ENCODE measurements at regions of chr6 and their contacts with region 1.

Region 1: GRCh38 chr6:97110626-97111025 is 172.4 kb downstream of the MMS22L start:
- DNase-seq: no peak
- H3K4me3 ChIP-seq: no peak overlapping the region
- H3K27ac ChIP-seq: no peak overlapping the region
- H3K4me1 ChIP-seq: no peaks in the 10 kb centered on the region
- H3K27me3 ChIP-seq: no peaks in the 10 kb centered on the region
- CTCF ChIP-seq: no peak
- EP300 ChIP-seq: no peak
- POLR2A ChIP-seq: no peak

Region 2: GRCh38 chr6:97947841-97948240 is 837.2 kb after region 1 on chr6:
- intact Hi-C with region 1: loop called in 1 of 4 experiments (anchors 10 kb)
- DNase-seq: no peak
- H3K4me3 ChIP-seq: no peak overlapping the region
- H3K27ac ChIP-seq: no peak overlapping the region
- H3K4me1 ChIP-seq: no peaks in the 10 kb centered on the region
- H3K27me3 ChIP-seq: no peaks in the 10 kb centered on the region
- CTCF ChIP-seq: no peak
- EP300 ChIP-seq: no peak
- POLR2A ChIP-seq: no peak

Measured in ovary (tissue), 10 donors.